ENCODE measurements at regions of chr6 and their contacts with region 1.

Region 1: GRCh38 chr6:163679753-163680152 is 265.2 kb downstream of the QKI start:
- DNase-seq: no peak
- ATAC-seq: no peak
- H3K4me3 ChIP-seq: no peak overlapping the region
- H3K27ac ChIP-seq: no peak overlapping the region
- H3K4me1 ChIP-seq: no peaks in the 10 kb centered on the region
- H3K27me3 ChIP-seq: no peaks in the 10 kb centered on the region
- CTCF ChIP-seq: no peak

Region 2: GRCh38 chr6:162856885-162857284 is 822.9 kb before region 1 on chr6:
- intact Hi-C with region 1: no loop called
- DNase-seq: no peak
- ATAC-seq: peak; percentile 80 to 95 (median 92)
- H3K4me3 ChIP-seq: peak overlapping the region; percentile 61
- H3K27ac ChIP-seq: peak overlapping the region; percentile 72
- H3K4me1 ChIP-seq: no peaks in the 10 kb centered on the region
- H3K27me3 ChIP-seq: no peaks in the 10 kb centered on the region
- CTCF ChIP-seq: peak; percentile 52

Region 3: GRCh38 chr6:163651915-163652668 is 27.7 kb before region 1 on chr6:
- intact Hi-C with region 1: loop called in 1 of 2 experiments (anchors 1 kb)
- DNase-seq: no peak
- ATAC-seq: peak in 3 of 4 donors; percentile 59 to 71 (median 68)
- H3K4me3 ChIP-seq: no peak overlapping the region
- H3K27ac ChIP-seq: no peak overlapping the region
- H3K4me1 ChIP-seq: no peaks in the 10 kb centered on the region
- H3K27me3 ChIP-seq: no peaks in the 10 kb centered on the region
- CTCF ChIP-seq: no peak

Measured in psoas muscle (tissue), 8 donors.